PC-3 (cell line): ENCODE measurements at regions of chr19 and their contacts with region 1.

Region 1: GRCh38 chr19:57320180-57321084 is at the start of gene ZNF543:
- DNase-seq: peak; percentile 98
- ATAC-seq: peak; percentile 99
- H3K4me3 ChIP-seq: peak within 1 kb of the TSS; percentile 88
- H3K27ac ChIP-seq: peak within 1 kb of the TSS; percentile 19; the same call in 1 of the 2 replicates
- H3K4me1 ChIP-seq: peaks cover 23% of the 10 kb centered on the region
- H3K27me3 ChIP-seq: 0 out of 2 replicates have a peak, but pooled peaks cover under 1% of the 10 kb centered on the region
- CTCF ChIP-seq: no peak
- total RNA-seq, gene ZNF543: 5.2 and 7.6 TPM in 2 replicates

Region 2: DNA sequence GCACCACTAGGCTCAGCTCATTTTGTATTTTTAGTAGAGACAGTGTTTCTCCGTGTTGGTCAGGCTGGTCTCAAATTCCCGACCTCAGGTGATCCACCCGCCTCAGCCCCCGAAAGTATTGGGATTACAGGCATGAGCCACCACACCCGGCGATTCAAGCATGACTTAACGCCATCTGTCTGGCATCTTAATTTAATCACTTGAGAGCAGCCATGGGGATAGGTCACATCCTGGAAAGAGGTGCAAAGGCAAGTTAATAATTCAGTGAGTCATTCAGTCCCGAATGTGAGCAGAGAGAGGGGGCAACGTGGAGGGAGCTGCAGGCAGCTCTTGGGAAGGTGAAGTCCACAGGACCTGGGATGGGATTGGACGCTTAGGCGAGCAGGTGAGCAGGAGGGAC is 232.3 kb before region 1 on chr19:
- CTCF ChIA-PET with region 1: no interaction called
- POLR2A ChIA-PET with region 1: no interaction called
- intact Hi-C with region 1: no loop called
- DNase-seq: no peak
- ATAC-seq: no peak
- H3K4me3 ChIP-seq: no peak overlapping the region
- H3K27ac ChIP-seq: no peak overlapping the region
- H3K4me1 ChIP-seq: no peaks in the 10 kb centered on the region
- H3K27me3 ChIP-seq: peaks cover 31% of the 10 kb centered on the region
- CTCF ChIP-seq: no peak

Region 3: DNA sequence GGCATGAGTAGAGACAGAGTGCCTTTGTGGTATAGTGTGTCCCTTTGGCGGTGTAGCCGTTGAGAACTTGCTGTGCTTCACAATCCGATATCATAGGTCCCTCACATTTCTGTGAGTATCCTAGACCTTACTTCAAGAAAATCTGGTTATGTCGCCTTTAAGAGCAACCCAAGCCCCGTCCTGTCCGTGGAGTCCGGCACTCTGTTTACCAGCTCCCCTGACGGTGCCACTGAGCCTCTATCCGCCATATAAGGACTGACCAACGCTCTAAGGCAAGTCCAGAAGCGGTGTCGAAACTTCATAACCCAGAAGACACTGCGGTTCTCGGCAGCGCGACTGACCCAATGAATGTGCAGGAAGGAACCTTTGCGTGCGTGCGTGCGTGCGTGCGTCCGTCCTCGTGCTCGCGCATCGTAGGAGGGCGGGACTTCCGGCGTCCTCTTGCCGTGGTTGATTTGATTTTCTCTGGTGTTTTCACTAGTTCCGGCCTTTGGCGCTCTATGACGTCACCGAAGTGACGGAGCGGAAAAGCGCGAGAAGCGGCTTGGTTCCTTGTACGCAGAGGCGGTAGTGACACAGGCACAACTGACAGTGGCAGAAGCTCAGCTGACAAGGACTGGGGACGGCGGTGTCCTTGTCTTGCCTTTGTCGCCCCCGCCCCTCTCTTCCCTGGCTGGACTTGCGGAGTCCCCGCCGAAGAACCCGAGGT is 42.7 kb after region 1 on chr19 and contains the starts of genes TRAPPC2B and ZNF547:
- CTCF ChIA-PET with region 1: no interaction called
- POLR2A ChIA-PET with region 1: interaction called, 4 read pairs
- intact Hi-C with region 1: loop called (anchors 1 kb)
- DNase-seq: peak; percentile 99
- ATAC-seq: peak; percentile 99
- H3K4me3 ChIP-seq: peak within 1 kb of the TSS; percentile 80
- H3K27ac ChIP-seq: peak within 1 kb of the TSS; percentile 32
- H3K4me1 ChIP-seq: peaks cover 13% of the 10 kb centered on the region
- H3K27me3 ChIP-seq: no peaks in the 10 kb centered on the region
- CTCF ChIP-seq: no peak
- total RNA-seq, gene TRAPPC2B: 16.1 and 21.0 TPM in 2 replicates
- total RNA-seq, gene ZNF547: 0.81 and 3.2 TPM in 2 replicates